HEK293 (cell line): ENCODE measurements at regions of chr1 and their contacts with region 1.

Region 1: DNA sequence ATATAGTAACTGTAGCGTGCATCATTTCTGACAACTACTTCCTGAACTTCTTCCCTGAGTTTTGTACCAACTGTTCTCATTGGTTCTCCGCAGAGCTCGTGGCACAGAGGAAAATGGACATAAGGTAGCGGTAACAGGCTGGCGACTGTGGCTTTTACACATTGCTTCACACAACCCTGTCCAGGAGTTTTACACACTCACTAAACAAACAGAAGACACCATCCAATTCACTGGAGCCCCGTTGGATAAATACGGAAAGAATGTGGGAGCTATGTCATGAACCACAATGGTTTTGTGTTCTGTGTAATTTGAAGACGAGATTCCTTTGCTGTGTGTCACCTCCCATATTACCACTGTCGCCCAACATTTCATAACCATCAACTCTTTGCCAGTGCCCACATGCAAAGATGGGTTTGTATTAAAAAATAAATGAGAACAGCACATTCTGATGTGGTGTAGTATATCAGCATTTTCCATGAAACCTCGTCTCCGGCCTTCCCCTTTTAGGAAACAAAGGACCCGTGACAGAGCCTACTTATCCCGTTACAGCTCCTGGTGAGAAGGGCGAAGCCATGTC is 47.3 kb upstream of the ENAH start:
- H3K4me3 ChIP-seq: no peak overlapping the region; the same call in 1 of the 2 replicates
- H3K27ac ChIP-seq: no peak overlapping the region; the same call in 1 of the 2 replicates
- H3K4me1 ChIP-seq: peaks cover 25% of the 10 kb centered on the region
- CTCF ChIP-seq: no peak

Region 2: DNA sequence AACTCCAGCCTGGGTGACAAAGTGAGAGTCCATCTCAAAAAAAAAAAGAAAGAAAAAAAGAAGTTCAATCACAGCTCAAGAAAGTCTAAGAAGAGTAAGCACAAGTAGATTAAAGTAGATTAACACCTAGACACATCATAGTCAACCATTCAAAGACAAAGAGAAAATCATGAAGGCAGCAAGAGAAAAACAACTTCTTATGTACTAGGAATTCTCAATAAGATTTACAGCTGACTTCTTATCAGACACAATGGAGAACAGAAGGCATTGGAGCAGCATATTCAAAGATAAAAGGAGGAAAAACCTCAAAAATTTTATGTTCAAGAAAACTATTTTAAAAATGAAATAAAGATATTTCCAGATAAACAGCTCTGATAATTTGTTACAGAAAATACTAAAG is 419.7 kb before region 1 on chr1:
- CTCF ChIA-PET with region 1: no interaction called
- POLR2A ChIA-PET with region 1: no interaction called
- H3K4me3 ChIP-seq: no peak overlapping the region
- H3K27ac ChIP-seq: no peak overlapping the region
- H3K4me1 ChIP-seq: no peaks in the 10 kb centered on the region
- CTCF ChIP-seq: no peak

Region 3: GRCh38 chr1:225418598-225418997 is 281.7 kb before region 1 on chr1:
- CTCF ChIA-PET with region 1: no interaction called
- POLR2A ChIA-PET with region 1: no interaction called
- H3K4me3 ChIP-seq: no peak overlapping the region
- H3K27ac ChIP-seq: no peak overlapping the region
- H3K4me1 ChIP-seq: peaks cover 18% of the 10 kb centered on the region; the same call in 1 of the 2 replicates
- CTCF ChIP-seq: no peak

Region 4: DNA sequence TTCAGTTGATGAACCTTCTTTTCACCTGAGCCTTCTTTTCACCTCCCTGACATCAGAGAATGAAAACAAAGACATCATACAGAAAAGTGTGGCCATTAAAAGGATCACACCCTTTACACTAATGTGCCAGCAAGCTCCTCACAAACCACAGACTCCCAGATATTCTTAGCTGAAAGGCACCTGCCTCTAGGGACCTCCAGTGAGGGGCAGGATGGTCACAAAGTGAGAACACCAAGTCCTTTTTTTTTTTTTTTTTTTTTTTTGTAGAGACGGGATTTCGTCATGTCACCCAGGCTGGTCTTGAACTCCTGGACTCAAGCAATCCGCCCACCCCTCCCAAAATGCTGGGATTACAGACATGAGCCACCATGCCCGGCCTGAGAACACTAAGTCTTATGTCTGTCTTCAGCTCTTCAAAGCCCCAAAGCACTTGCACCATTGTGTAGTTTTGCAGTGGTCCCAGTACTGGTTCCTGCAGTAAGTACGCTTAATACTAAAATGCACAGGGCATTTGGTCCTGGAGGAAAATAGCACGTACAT is 214.2 kb before region 1 on chr1:
- CTCF ChIA-PET with region 1: no interaction called
- POLR2A ChIA-PET with region 1: no interaction called
- H3K4me3 ChIP-seq: no peak overlapping the region
- H3K27ac ChIP-seq: no peak overlapping the region
- H3K4me1 ChIP-seq: no peaks in the 10 kb centered on the region
- CTCF ChIP-seq: no peak

Region 5: GRCh38 chr1:225710804-225711203 is 10.6 kb after region 1 on chr1:
- CTCF ChIA-PET with region 1: interaction called, 5 read pairs
- POLR2A ChIA-PET with region 1: interaction called, 16 read pairs
- H3K4me3 ChIP-seq: no peak overlapping the region
- H3K27ac ChIP-seq: no peak overlapping the region
- H3K4me1 ChIP-seq: no peaks in the 10 kb centered on the region
- CTCF ChIP-seq: no peak

Region 6: DNA sequence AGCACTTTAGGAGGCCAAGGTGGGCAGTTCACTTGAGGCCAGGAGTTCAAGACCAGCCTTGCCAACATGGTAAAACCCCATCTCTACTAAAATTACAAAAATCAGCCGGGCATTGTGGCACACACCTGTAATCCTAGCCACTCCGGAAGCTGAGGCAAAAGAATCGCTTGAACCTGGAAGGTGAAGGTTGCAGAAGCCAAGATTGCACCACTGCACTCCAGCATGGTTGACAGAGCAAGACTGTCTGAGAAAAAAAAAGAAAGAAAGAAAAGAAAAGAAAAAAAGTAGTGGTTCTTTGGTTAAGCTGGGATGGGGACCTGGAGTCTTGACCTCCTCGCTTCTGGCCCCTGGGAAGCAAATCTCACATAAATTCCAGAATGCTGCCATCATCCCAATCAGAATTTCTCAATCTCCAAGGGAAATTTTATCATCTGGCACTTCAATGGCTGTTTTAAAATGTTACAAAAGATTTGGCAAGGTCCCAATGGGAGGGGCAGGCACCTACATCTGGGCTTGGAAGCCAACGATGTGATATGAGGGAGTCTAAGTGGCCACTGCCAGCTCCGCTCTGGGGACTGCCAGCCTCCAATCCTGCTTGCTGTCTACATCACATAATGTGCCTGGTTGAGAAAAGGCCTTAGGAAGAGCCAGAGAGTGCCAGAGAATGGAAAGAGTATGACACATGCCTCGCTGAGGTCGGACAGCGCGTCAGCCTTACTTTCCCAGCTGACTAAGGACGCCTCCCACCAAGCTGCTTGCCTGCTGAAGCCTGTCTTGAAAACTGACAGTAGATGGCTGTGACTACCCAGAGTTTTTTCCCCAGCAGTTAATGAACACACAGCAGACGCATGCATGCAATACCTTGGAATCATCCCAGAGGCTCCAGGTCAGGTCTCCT is 35.2 kb after region 1 on chr1:
- CTCF ChIA-PET with region 1: no interaction called
- POLR2A ChIA-PET with region 1: no interaction called
- H3K4me3 ChIP-seq: no peak overlapping the region
- H3K27ac ChIP-seq: no peak overlapping the region
- H3K4me1 ChIP-seq: peaks cover 17% of the 10 kb centered on the region
- CTCF ChIP-seq: 0 out of 2 replicates have a peak, but pooled peaks have one; percentile 16